GM13977 (cell line): ENCODE measurements at regions of chr14 and their contacts with region 1.

Region 1: GRCh38 chr14:61456720-61457119 is 135.3 kb downstream of the PRKCH start:
- DNase-seq: peak; percentile 65
- CTCF ChIP-seq: peak; percentile 81

Region 2: GRCh38 chr14:61837336-61838229 is 380.9 kb after region 1 on chr14:
- in situ Hi-C with region 1: loop called (anchors 10 kb)
- DNase-seq: peak; percentile 56
- CTCF ChIP-seq: peak; percentile 90

Region 3: GRCh38 chr14:62126879-62127478 is 670.3 kb after region 1 on chr14:
- in situ Hi-C with region 1: loop called (anchors 10 kb)
- DNase-seq: peak; percentile 38
- CTCF ChIP-seq: peak; percentile 83